ENCODE measurements at regions of chr19 and their contacts with region 1.

Region 1: GRCh38 chr19:15418588-15419412 is at the start of gene AKAP8L:
- DNase-seq: peak; percentile 98
- H3K4me3 ChIP-seq: peak within 1 kb of the TSS; percentile 96
- CTCF ChIP-seq: peak; percentile 86

Region 2: DNA sequence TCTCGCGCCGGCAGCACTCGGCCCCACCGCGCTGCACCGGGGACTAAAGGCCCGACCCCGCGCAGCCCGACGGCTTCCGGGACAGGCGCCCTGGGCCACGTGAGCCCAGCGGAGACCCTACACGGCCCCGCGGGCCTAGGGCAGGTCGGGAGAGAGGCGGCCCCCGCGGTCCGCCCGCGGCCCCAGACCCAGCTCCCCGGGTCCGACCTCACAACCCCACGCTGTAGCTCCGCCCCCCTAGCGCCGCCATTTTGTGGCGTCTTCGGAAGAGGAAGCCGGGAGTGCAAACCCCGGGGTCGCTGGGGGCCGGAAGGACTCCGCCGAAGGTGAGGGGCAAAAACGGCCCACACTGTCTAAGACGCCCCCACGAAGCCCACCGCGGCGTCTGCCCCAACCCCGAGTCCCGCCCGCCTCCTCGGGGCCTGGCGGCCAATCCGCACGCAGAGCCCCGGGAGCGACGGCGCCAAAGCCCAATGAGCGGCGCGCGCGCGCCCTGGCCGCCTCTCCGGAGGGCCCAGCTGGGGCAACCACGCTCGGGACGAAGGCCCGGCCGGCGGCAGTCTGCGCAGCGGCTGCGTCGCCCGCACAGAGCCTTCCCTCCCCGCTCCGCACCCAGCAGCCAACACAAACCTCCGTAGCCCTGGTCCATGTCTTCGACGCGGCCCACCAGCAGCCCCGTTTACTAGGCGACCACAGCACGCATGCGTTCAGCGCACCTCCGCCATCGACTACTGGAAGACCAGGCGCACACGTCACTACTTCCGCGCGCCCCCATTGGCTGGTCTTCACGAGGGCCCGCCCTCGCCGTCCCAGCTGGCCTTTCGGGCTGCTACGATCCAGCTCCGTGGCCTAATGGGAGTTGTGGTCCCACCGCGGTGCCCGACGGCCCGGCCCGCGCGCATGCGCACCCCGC is 39.5 kb before region 1 on chr19 and contains the start of gene AKAP8:
- CTCF ChIA-PET with region 1: interaction called, 5 read pairs
- POLR2A ChIA-PET with region 1: interaction called, 26 read pairs
- DNase-seq: peak; percentile 87
- H3K4me3 ChIP-seq: peak within 1 kb of the TSS; percentile 98
- CTCF ChIP-seq: no peak

Region 3: DNA sequence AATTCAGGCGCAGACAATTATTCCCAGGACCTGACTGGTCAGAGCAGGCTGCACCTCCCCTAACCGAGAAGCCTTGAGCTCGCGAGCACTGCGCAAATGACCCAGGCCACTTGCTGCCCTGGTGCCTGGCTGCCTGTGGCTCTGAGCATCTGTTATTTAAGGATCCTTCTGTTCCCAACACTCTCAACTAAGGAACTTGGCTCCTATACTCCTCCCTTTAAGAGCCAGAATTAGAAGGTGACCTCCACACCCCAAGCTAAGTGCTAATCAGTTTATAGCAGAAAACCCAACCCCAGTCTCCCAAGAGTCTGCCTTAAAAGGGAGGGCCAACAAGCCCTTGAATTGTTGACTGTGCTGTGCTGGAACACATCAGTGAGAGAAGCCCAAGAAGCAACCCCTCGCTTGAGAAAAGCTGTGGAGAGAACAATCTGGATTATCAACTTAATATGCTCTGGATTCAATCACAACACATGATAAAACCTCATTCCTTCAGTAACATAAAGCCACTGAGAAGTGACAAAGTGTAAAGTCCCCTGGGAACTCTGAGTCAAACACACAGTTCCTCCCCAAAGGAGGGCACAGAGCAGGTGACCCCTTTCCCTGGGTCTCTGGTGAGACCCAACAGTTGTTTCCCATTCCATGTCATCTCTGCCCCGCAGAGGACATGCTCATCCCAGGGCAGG is 14.6 kb before region 1 on chr19:
- CTCF ChIA-PET with region 1: interaction called, 6 read pairs
- POLR2A ChIA-PET with region 1: interaction called, 13 read pairs
- DNase-seq: no peak
- H3K4me3 ChIP-seq: no peak overlapping the region
- CTCF ChIP-seq: no peak

Region 4: GRCh38 chr19:15432629-15433518 is 14.1 kb after region 1 on chr19:
- CTCF ChIA-PET with region 1: interaction called, 39 read pairs
- POLR2A ChIA-PET with region 1: interaction called, 44 read pairs
- DNase-seq: no peak
- H3K4me3 ChIP-seq: peak overlapping the region; percentile 64
- CTCF ChIP-seq: no peak

Region 5: DNA sequence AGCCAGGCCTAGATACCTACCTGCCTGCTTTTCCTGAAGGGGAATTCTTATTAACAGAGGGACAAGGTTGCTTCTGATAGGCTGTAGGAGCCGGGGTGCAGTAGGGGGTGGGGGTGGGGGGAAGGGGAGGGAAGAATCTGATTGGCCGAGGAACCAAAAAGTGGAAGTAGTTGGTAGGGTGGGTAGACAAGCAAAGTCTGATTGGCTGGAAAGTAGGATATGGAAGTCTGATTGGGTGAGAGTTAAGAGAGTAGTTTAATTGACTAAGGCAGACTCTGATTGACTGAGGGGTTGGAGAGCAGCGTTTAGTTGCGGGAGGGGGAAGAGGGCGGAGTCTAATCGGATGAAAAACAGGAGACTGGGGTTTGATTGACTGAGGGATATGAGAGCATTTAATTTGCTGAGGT is 80.1 kb after region 1 on chr19:
- CTCF ChIA-PET with region 1: no interaction called
- POLR2A ChIA-PET with region 1: no interaction called
- DNase-seq: no peak
- H3K4me3 ChIP-seq: no peak overlapping the region
- CTCF ChIP-seq: no peak

Region 6: DNA sequence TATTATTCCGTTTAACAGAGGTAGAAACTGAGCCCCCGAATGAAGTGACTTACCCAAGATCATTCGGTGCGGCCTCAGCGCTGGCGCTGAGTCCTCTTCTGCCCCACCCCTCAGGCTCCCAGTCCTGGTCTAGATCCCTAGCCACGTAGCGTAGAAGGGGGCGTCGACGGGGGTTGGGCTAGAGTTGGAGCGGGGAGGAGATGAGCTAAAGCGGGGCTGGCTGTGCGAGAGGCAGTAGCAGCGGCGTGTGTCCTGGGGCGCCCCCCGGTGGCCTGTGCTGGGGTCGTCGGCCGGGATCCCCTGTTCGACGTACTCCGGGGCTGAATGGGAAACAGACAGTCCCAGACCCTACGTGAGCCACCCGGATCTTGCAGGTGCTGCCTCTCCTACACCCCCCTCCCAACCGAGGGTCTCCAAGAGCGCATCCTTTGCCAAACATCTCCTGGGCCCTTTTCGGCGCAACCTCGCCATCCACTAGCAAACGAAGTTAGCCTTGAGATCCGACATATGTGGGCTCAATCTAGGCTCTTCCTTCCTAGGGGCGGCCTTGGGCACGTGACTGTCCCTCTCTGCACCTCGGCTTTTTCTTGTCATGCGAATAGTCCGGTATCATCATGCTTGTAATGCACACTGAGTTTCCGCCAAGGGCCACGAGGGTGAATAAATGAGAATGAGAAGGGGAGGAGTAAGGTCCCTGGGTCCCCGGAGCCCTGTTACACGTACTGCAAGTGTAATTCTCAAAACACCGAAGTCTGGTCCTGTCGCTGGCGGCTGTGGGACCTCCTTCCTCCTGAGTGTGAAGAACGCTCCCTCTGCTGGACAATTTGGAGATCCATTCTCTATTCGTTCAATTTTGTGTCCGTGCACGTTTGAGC is 137.2 kb after region 1 on chr19:
- CTCF ChIA-PET with region 1: interaction called, 10 read pairs
- POLR2A ChIA-PET with region 1: interaction called, 4 read pairs
- DNase-seq: peak; percentile 59
- H3K4me3 ChIP-seq: peak overlapping the region; percentile 43
- CTCF ChIP-seq: peak; percentile 91

Measured in AG04449 (cell line).